ENCODE measurements at regions of chr1 and their contacts with region 1.

Region 1: DNA sequence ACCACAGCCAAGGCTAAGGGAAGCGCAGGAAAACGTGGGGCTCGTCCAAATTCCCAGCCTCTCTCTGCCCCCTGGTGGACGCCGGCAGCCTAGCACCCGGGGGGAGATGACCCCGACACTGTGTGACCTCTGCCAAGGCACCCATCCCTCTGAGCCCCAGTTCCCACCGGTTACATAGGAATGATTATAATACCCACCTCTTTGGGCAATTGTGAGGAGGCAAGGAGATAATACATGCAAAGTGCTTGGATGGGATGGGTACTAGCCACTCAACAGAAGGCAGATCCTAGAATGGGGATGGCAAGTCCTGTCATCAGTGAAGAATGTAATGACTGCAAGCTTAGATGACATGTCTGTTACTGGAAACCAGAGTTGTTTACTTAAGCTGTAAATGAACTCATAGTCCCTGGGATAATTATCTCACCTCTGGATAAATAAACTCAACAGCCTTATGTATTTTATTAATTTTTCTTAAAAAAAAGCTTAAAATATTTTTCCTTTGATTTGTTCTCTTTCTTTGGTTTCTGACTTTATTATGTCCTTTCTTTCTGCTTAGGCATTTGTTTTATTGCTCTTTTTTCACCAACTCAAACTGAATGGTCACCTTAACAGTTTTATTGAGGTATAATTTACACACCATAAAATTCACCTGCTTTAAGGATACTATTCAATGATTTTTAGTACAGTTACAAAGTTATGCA is 11.3 kb upstream of the BMP8B start:
- DNase-seq: peak; percentile 65 to 69
- ATAC-seq: peak; percentile 92 to 95
- H3K4me3 ChIP-seq: peak overlapping the region; percentile 16; the same call in 1 of the 3 replicates
- H3K27ac ChIP-seq: peak overlapping the region; percentile 60 to 69; a peak in 4 of 6 replicates
- H3K4me1 ChIP-seq: peaks cover 12% of the 10 kb centered on the region; the same call in 2 of the 3 replicates
- CTCF ChIP-seq: peak; percentile 59
- EP300 ChIP-seq: no peak
- POLR2A ChIP-seq: no peak
- RAD21 ChIP-seq: peak; percentile 55

Region 2: DNA sequence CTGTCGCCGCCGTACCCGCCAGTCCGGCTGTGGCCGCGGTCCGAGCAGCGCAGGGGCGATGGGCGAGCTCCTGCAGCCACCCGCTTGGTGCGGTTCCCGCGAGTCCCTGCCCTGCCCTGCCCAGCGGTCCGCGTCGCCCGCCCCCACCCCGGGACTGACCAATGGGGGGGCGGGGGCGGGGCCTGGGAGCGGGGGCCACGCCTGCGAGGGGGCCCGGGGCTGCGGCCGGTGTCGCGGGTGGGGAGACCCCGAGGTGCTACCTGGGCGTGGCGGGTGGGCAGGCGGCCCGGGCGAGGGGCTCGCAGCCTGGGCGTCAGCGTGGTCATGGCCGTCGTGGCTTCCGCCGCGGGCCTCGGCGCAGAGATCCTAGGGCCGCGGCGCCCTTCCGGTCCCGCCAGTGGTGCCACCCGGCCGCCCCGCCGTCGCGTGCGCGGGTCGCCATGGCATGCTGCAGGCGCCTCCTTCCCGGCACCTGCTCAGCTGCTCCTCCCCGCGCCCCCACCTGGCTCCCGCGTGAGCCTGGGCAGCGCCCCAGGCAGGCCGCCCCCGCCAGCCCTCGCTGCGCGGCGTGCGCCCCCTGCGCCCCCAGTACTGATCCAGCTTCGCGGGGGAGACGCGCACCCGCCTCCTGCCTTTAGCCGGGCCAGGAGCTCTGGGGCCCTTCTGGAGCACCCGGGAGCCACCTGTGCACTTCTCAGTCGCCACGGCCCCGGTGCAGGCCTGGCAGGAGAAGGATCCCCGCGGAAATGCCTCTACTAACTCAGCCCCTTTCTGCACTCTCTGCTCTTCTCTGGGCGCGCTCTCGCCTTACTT is 11.0 kb before region 1 on chr1 and contains the start of gene BMP8B:
- CTCF ChIA-PET with region 1: interaction called, 16 read pairs
- POLR2A ChIA-PET with region 1: interaction called, 5 read pairs
- DNase-seq: peak; percentile 59 to 67
- ATAC-seq: peak; percentile 84 to 92
- H3K4me3 ChIP-seq: peak within 1 kb of the TSS; percentile 64
- H3K27ac ChIP-seq: peak within 1 kb of the TSS; percentile 75 to 95
- H3K4me1 ChIP-seq: peaks cover 5% of the 10 kb centered on the region; the same call in 1 of the 3 replicates
- CTCF ChIP-seq: no peak
- EP300 ChIP-seq: no peak
- POLR2A ChIP-seq: peak; percentile 15; the same call in 1 of the 2 replicates
- RAD21 ChIP-seq: no peak
- polyA plus RNA-seq, gene BMP8B: 3.1 and 3.4 TPM in 2 replicates

Measured in A549 (cell line).